Head of caudate nucleus (tissue), 42 donors: ENCODE measurements at regions of chr10 and their contacts with region 1.

Region 1: GRCh38 chr10:77173615-77174461 is 463.8 kb downstream of the KCNMA1 start:
- DNase-seq: peak in 41 of 42 donors; percentile 40 to 91 (median 78)

Region 2: DNA sequence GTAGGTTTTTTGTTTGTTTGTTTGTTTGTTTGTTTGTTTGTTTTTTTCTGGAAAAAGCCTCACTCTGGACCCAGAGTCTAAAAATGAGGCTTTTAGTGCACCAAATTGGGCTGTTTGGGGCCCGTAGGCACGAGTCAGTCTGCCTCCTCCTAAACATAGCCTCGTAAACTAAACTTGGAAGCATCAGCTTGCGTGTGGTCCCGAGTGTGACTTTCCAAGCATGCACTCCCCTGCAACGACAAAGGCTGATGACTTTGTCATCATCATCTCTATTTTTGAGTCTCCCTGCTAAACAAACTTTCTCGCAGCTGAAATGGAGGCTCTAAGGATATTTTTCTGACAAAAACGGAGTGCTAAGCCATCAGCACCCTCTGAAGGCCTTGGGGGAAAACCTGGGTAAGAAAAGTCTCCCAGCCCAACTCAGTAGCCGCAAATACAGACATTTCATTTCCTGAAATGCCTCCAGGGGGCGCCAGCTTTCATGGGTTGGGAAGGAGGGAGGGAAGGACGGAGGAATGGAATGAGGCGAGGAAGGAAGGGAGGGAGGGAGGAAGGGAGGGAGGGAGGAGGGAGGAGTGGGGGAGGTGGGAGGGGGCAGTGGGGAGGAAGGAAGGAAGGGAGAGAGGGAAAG is 217.9 kb after region 1 on chr10:
- intact Hi-C with region 1: loop called (anchors 10 kb)
- DNase-seq: peak; percentile 33 to 92 (median 79)